ENCODE measurements at regions of chr6 and their contacts with region 1.

Region 1: GRCh38 chr6:15405129-15406068 is 159.5 kb downstream of the JARID2 start:
- DNase-seq: no peak
- ATAC-seq: no peak

Region 2: DNA sequence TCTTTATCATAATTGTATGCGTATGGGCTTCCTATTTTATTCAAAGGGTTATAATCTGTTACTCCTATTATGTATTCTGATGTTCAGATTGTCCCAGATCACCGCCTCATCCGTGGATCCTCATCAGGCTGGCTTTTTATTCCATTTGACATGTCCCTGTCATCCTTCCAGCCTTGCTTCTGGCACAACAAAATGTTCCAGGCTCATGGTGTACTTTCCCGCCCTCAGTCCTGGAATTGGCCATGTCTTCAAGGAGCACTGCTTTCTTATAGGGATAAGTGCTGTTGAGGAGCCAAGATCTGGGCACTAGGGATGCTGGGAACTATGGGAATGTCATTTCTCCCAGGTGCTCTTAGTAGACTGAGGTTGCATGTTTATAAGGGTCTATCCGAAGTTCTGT is 48.2 kb after region 1 on chr6:
- intact Hi-C with region 1: loop called (anchors 1 kb)
- DNase-seq: no peak
- ATAC-seq: no peak